ENCODE measurements at regions of chr3 and their contacts with region 1.

Region 1: DNA sequence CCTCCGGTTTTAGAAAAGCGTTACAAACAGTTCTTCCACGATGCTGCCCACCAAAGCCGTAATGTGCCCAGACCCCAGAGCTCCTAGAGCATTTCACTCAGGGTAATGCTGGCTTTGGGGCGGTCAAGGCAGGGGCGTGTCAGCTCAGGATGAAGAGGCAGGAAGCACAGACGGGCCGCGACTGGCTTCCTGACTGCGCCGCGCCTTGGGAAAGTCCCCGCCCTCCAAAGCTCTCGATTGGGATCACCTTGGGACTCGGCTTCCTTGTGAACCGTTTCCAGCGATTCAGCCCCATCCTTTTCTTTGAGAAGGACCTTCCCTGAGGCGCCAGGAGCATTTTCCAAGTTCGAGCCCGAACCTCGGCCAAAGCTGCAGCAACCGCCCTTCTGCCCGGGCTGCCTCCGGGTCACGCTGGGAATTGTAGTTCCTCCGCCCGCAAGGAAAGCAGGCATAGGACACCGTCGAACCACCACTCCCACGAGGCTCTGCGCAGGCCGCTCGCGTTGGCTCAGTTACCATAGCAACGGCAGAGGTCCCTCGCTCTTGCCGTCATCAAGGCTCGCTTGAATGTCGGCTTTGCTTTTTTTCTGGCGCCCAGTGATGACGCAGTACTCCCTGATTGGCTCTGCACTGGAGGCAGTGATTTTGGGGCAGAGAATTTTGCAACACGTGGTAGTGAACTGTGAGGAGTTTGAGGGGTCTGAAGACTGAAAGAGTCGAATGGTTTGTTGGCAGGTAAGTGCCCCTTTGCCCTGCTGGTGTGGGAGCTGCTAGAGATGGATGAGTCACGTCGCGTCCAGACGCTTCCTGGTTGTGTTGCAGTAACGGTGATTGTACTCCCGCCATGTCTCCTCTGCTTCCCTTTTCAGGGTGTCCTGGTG is at the starts of genes CCDC191 and QTRT2:
- DNase-seq: peak; percentile 95
- H3K4me3 ChIP-seq: peak within 1 kb of the TSS; percentile 81
- H3K27me3 ChIP-seq: no peaks in the 10 kb centered on the region
- CTCF ChIP-seq: no peak
- polyA plus RNA-seq, gene CCDC191: 1.3 and 1.9 TPM in 2 replicates
- polyA plus RNA-seq, gene QTRT2: 5.3 and 7.5 TPM in 2 replicates

Region 2: GRCh38 chr3:114071786-114072185 is 15.4 kb after region 1 on chr3:
- CTCF ChIA-PET with region 1: no interaction called
- POLR2A ChIA-PET with region 1: no interaction called
- DNase-seq: no peak
- H3K4me3 ChIP-seq: no peak overlapping the region
- H3K27me3 ChIP-seq: no peaks in the 10 kb centered on the region
- CTCF ChIP-seq: no peak

Region 3: GRCh38 chr3:114152519-114153151 is 96.3 kb after region 1 on chr3:
- CTCF ChIA-PET with region 1: no interaction called
- POLR2A ChIA-PET with region 1: interaction called, 14 read pairs
- DNase-seq: peak; percentile 22
- H3K4me3 ChIP-seq: peak overlapping the region; percentile 47
- H3K27me3 ChIP-seq: peaks cover 2% of the 10 kb centered on the region; the same call in 1 of the 2 replicates
- CTCF ChIP-seq: peak; percentile 95